SK-N-SH (cell line): ENCODE measurements at regions of chr14 and their contacts with region 1.

Region 1: GRCh38 chr14:54773171-54773975 is 129.3 kb downstream of the GCH1 start:
- DNase-seq: peak; percentile 91
- H3K4me3 ChIP-seq: peak overlapping the region in 1 of 2 experiments; percentile 34; a peak in 1 of 4 replicates
- H3K27ac ChIP-seq: peak overlapping the region; percentile 91 to 97
- H3K4me1 ChIP-seq: peaks cover 17 to 50% of the 10 kb centered on the region in 2 experiments
- H3K27me3 ChIP-seq: no peaks in the 10 kb centered on the region
- CTCF ChIP-seq: peak; percentile 73
- EP300 ChIP-seq: peak; percentile 28 to 93; a peak in 3 of 4 replicates
- RAD21 ChIP-seq: peak; percentile 83

Region 2: GRCh38 chr14:54555651-54556050 is 217.7 kb before region 1 on chr14:
- CTCF ChIA-PET with region 1: interaction called, 39 read pairs
- POLR2A ChIA-PET with region 1: no interaction called
- DNase-seq: no peak
- H3K4me3 ChIP-seq: no peak overlapping the region
- H3K27ac ChIP-seq: no peak overlapping the region
- H3K4me1 ChIP-seq: peaks cover 0 to 5% of the 10 kb centered on the region in 2 experiments; a peak in 2 of 4 replicates
- H3K27me3 ChIP-seq: no peaks in the 10 kb centered on the region
- CTCF ChIP-seq: peak; percentile 45; the same call in 1 of the 2 replicates
- EP300 ChIP-seq: no peak
- RAD21 ChIP-seq: peak; percentile 34

Region 3: DNA sequence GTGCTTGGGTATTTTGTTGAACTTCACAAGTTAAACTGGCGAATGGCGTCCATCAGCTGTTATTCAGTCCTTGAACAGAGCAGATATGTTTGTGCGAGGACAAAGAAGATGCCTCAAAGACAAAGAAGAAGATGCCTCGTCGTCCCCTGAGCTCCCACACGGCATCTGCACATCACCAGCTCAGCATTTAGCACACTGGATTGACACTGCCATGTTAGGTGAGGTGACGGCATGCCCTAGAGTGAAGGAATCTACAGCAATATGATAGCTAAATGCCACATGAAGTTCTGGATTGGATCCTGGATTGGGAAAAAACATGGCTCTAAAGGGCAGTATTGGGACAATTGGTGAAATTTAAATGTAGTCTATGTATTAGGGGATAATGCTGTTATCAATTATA is 191.0 kb before region 1 on chr14:
- CTCF ChIA-PET with region 1: interaction called, 10 read pairs
- POLR2A ChIA-PET with region 1: no interaction called
- DNase-seq: no peak
- H3K4me3 ChIP-seq: no peak overlapping the region
- H3K27ac ChIP-seq: no peak overlapping the region
- H3K4me1 ChIP-seq: peaks cover 0 to 16% of the 10 kb centered on the region in 2 experiments; a peak in 3 of 4 replicates
- H3K27me3 ChIP-seq: no peaks in the 10 kb centered on the region
- CTCF ChIP-seq: no peak
- EP300 ChIP-seq: no peak
- RAD21 ChIP-seq: no peak

Region 4: DNA sequence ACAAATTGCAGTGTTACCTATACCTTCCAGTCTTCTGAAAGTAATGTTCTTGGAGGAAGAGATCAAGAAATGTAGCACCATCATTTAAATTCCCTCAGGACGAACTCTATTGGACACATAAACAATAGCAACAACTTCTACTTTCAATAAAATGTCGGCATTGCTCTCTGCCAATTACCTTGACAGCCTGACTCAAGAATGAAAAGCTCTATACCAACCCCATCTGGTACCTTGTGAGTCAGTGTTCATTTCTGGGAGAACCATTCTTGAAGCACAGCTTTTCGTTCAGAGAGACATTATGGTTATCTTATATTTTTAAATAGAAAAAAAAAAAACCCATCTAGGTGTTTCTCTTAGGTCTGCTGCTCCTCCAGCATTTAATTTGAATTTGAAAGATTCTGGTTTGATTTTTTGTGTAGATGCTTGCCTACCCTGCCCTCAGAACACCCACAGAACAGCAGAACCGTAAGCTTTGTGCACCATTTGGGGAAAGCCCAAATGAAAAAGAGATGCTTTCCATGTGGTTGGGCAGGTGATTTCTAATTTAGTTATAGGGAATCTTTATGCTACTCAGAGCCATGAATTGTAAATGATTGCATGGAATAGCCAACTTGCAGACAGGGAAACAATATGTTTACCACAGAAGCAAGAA is 50.5 kb before region 1 on chr14:
- CTCF ChIA-PET with region 1: interaction called, 15 read pairs
- POLR2A ChIA-PET with region 1: no interaction called
- DNase-seq: no peak
- H3K4me3 ChIP-seq: no peak overlapping the region
- H3K27ac ChIP-seq: no peak overlapping the region
- H3K4me1 ChIP-seq: peaks cover 2 to 8% of the 10 kb centered on the region in 2 experiments; a peak in 2 of 4 replicates
- H3K27me3 ChIP-seq: no peaks in the 10 kb centered on the region
- CTCF ChIP-seq: peak; percentile 52
- EP300 ChIP-seq: no peak
- RAD21 ChIP-seq: peak; percentile 59

Region 5: GRCh38 chr14:54756656-54757392 is 16.5 kb before region 1 on chr14:
- CTCF ChIA-PET with region 1: interaction called, 15 read pairs
- POLR2A ChIA-PET with region 1: no interaction called
- DNase-seq: no peak
- H3K4me3 ChIP-seq: no peak overlapping the region
- H3K27ac ChIP-seq: no peak overlapping the region
- H3K4me1 ChIP-seq: peaks cover 0 to 3% of the 10 kb centered on the region in 2 experiments; a peak in 1 of 4 replicates
- H3K27me3 ChIP-seq: no peaks in the 10 kb centered on the region
- CTCF ChIP-seq: no peak
- EP300 ChIP-seq: no peak
- RAD21 ChIP-seq: no peak

Region 6: DNA sequence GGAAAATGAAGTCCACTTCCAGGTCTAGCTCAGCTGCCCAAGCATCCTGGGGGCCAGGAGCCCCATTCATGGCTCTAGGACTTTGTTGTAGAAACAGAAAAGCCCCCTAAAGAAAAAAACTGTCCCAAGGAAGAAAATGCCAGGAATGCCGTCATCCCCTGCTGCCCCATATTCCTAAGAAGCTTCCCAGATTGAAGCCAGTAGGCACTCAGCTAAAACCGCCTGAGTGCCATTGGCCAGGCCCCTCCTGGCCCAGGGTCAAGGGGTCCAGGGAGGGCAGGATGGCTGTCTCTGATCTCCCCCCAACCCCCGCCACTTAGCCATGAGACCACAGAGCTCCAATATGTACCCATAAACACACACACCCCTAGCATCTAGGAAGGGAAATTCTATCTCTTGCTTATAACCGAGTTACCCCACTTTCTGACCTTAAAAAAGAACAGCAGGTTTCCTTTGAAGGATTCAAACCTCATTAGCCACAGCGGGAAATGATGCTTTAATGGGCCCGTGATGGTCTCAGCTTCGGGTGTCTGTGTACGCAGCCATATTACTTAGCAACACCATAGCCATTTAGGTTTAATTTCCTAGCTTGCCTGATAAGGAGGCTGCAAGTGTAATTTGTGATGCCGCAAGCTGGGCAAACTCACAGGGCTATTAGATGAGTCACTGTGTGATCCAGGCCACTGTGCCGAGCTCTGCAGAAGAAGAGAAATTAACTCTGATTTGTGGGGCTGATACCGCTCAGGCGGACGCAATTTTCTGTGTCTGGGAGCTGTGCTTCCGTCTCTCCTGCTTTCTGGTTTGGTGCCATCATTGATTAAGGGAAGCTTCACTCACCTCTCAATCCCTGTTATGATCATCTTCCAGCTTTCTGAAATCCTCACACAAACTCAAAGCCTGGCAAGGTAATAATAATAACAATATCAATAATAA is 45.1 kb after region 1 on chr14:
- CTCF ChIA-PET with region 1: interaction called, 11 read pairs
- POLR2A ChIA-PET with region 1: no interaction called
- DNase-seq: peak; percentile 76
- H3K4me3 ChIP-seq: peak overlapping the region in 1 of 2 experiments; percentile 12; a peak in 3 of 4 replicates
- H3K27ac ChIP-seq: peak overlapping the region; percentile 67 to 100
- H3K4me1 ChIP-seq: peaks cover 5 to 56% of the 10 kb centered on the region in 2 experiments; a peak in 3 of 4 replicates
- H3K27me3 ChIP-seq: no peaks in the 10 kb centered on the region
- CTCF ChIP-seq: no peak
- EP300 ChIP-seq: peak; percentile 63 to 98; a peak in 3 of 4 replicates
- RAD21 ChIP-seq: peak; percentile 28